ENCODE measurements at regions of chr7 and their contacts with region 1.

Region 1: DNA sequence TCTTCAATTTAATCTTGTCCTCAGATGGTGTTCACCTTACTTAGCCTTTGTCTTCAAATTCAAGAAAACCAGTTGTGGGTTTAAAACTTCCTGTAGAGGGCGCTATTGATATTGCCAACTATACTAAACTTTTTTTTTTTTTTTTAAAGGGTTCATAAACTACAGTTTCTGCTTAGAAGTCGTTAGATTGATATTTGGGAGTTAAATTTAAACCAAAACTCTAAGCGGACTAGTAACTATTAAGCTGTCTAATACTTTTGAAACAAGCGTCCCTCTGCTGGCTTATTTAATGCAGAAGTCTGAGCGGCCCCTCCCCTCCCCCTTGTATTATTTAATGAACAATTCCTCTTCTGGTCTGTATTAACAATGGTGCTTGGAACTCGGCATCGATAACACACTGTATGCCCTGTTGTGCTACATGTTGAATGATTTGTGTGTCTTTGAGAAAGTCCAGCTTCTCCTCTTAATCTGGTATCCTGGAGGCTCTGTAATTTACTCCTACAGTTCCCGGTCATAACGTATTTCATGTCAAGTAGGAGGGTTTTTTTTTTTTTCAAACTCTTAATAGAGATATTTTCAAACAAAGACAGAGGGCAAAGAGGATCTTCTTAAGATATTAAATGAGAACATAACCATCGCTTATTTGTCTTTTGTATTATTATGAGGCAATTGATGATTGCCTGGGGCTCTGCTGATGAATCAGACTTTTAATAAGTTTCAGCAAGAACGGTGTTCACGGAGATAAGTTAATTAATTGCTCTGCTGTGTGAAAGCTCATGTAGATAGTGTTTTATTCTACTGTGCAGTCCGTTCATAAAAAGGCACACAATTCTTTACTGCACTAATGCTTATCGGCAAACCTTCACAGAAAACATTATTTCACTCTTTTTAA is 22.6 kb upstream of the CREB5 start:
- DNase-seq: no peak
- H3K4me3 ChIP-seq: peak overlapping the region; percentile 46
- CTCF ChIP-seq: peak; percentile 37

Region 2: DNA sequence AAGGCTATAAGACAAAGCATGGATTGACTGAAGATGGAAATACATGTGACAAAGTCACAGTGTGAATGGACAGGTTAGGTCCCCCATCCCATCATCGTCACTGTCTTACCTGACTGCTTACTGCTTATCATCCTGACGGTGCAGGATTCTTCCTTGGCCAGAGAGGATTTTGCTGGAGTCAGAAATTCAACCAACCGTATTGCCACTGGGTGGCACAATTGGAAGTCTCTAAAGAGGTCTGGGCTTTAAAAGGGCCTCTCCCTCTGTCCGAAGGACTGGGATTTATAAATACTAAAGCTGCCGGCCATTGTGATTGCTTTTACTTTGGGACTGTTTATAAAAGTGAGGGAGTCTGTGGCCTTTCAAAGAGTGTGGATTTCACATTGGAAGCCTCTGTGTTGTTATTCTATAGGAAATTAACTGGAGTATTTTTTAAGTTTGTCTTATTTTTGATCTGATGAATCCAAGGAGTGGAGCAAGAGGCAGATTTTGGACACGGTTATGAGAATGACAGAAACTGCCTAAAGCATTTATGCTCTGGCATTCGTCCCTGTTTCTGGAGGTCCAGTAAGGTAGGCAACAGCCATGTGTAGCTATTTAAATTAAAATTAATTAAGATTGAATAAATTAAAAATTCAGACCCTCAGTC is 90.8 kb before region 1 on chr7:
- CTCF ChIA-PET with region 1: interaction called, 13 read pairs
- POLR2A ChIA-PET with region 1: no interaction called
- DNase-seq: no peak
- H3K4me3 ChIP-seq: no peak overlapping the region
- CTCF ChIP-seq: peak; percentile 52

Region 3: GRCh38 chr7:28378574-28379149 is 11.1 kb before region 1 on chr7:
- CTCF ChIA-PET with region 1: interaction called, 19 read pairs
- POLR2A ChIA-PET with region 1: no interaction called
- DNase-seq: no peak
- H3K4me3 ChIP-seq: no peak overlapping the region
- CTCF ChIP-seq: no peak

Region 4: GRCh38 chr7:28405662-28406061 is 15.9 kb after region 1 on chr7:
- CTCF ChIA-PET with region 1: interaction called, 14 read pairs
- POLR2A ChIA-PET with region 1: no interaction called
- DNase-seq: peak; percentile 95
- H3K4me3 ChIP-seq: no peak overlapping the region
- CTCF ChIP-seq: no peak

Region 5: DNA sequence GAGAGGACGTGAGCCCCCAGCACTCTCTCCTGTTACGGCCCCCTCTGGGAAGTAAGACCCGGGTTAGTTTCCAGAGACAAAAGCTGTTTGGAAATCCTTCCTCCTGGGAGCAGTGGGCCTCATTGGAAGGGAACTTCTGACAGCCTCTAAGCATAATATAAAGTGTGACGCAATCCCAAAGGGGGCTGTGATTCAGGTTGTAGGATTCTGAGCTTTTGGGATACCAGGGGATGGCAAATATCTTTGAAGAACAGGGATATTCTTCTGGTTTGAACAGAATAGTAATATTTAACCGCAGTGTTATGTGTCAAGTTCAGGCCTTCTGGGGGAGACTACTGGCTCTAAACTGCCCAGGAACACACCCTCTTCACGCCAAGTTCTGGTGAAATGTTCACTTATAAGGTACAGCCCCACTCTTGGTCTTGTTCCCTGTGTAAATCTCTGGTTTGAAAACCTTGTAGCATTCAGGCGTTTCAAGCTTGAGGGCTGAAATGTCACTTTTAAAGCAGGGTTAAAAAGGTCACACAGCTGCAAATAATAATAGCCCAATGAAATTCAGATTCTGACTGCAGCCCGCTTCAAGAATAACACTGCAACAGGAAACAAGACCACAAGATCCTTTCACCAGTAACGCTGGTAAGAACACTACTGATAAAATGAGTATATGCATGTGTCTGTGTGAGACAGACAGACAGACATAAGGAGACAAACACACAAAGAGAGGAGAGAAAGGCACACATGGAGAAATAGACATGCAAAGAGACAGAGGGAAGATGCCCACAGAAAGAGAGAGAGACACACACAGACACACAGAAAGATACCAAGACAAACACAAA is 91.6 kb after region 1 on chr7:
- CTCF ChIA-PET with region 1: no interaction called
- POLR2A ChIA-PET with region 1: no interaction called
- DNase-seq: peak; percentile 38
- H3K4me3 ChIP-seq: no peak overlapping the region
- CTCF ChIP-seq: no peak

Region 6: GRCh38 chr7:28853834-28854749 is 464.3 kb after region 1 on chr7:
- CTCF ChIA-PET with region 1: interaction called, 12 read pairs
- POLR2A ChIA-PET with region 1: no interaction called
- DNase-seq: no peak
- H3K4me3 ChIP-seq: peak overlapping the region; percentile 60
- CTCF ChIP-seq: peak; percentile 88

Measured in AG04449 (cell line).